Activated CD4-positive, alpha-beta memory T cell treated with anti-CD3 and anti-CD28 coated beads, Interleukin-2, amount 10 ng/mL, durations not matched to agents 7 days and 5 days (primary cell): ENCODE measurements at regions of chr17 and their contacts with region 1.

Region 1: DNA sequence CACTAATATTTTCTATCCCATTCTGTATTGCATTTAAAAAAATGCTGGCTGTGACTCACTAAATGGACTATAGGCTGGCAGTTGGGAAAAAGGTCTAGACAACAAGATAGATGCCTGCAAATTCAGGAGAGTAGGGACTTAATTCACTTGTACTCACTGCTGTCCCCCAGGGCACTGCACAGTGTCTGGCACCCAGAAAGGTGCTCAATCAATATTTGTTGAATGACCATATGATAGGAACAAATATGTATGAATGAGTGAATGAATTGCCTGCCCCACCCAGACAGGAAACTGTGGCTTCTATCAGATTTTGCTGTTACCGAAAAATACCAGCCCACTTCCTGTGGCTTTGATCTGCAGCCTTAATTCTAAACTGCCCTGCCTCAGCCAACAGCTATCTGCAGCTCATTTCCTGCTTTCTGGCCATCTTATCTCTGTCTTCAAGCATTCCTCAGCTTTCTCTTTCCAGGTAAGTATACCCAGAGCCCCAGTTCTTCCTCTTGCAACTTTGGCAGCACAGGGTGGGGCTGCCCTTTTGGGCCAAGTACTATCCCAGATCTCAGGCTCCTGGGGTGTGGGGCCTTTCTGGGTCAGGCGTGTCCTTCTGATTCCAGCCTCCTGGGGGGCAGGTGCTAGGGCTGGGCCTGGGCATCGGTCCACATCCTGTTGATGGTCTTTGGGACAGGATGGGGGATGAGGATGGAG is 15.3 kb upstream of the TNS4 start:
- DNase-seq: peak; percentile 87
- H3K4me3 Mint-ChIP-seq: peak overlapping the region; percentile 80
- H3K27ac Mint-ChIP-seq: peak overlapping the region; percentile 92
- H3K4me1 Mint-ChIP-seq: peaks cover 80% of the 10 kb centered on the region
- H3K27me3 Mint-ChIP-seq: peaks cover 2% of the 10 kb centered on the region

Region 2: GRCh38 chr17:40480501-40481003 is 36.2 kb before region 1 on chr17:
- CTCF ChIA-PET with region 1: interaction called, 20 read pairs
- POLR2A ChIA-PET with region 1: interaction called, 115 read pairs
- DNase-seq: peak; percentile 91
- H3K4me3 Mint-ChIP-seq: peak overlapping the region; percentile 55
- H3K27ac Mint-ChIP-seq: peak overlapping the region; percentile 89
- H3K4me1 Mint-ChIP-seq: peaks cover 90% of the 10 kb centered on the region
- H3K27me3 Mint-ChIP-seq: peaks cover 5% of the 10 kb centered on the region

Region 3: GRCh38 chr17:40490289-40490853 is 26.4 kb before region 1 on chr17:
- CTCF ChIA-PET with region 1: interaction called, 3 read pairs
- POLR2A ChIA-PET with region 1: interaction called, 15 read pairs
- DNase-seq: peak; percentile 30
- H3K4me3 Mint-ChIP-seq: no peak overlapping the region
- H3K27ac Mint-ChIP-seq: no peak overlapping the region
- H3K4me1 Mint-ChIP-seq: peaks cover 60% of the 10 kb centered on the region
- H3K27me3 Mint-ChIP-seq: peaks cover 5% of the 10 kb centered on the region

Region 4: GRCh38 chr17:40536295-40537171 is 19.8 kb after region 1 on chr17:
- CTCF ChIA-PET with region 1: interaction called, 59 read pairs
- POLR2A ChIA-PET with region 1: interaction called, 118 read pairs
- DNase-seq: no peak
- H3K4me3 Mint-ChIP-seq: no peak overlapping the region
- H3K27ac Mint-ChIP-seq: no peak overlapping the region
- H3K4me1 Mint-ChIP-seq: peaks cover 73% of the 10 kb centered on the region
- H3K27me3 Mint-ChIP-seq: peaks cover 32% of the 10 kb centered on the region

Region 5: DNA sequence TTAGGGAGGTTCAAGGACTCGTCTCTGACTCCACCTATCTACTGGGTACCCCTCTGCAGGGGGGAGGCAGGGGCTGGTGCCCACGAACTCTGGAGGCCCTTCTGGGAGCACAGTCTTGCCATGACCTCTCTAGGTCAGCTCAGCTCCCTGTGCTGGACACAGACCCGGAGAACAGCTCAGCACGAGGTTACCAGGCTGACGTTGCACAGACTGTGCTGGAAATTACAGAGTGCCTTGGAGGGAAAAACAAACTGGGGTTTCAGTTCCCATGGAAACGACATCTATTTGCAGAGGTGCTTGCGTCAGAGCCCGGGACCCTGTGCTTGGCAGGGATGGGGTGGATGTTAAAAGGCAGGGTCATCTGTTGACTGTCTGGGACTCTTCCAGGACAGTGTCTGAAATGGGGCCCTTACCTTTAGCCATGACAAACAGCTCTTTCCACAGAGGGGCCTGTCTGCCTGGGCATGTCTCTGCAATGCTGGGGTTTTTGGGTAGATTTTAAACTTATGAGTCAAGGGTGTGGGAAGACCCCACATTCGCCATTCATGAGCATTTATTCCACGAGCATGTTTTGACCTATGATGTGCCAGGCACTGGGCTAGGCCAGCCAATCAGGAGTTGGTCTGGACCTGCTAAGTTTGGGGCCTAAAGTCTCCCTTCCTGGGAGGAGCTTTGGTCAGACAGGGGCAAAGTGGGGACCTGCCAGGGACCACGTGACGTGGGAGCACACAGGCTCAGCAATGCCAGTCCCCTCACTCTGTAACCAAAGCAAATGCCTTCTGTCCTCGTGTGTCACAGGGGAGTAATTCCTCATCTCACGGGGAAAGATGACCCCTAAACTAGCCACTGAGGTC is 26.1 kb after region 1 on chr17:
- CTCF ChIA-PET with region 1: no interaction called
- POLR2A ChIA-PET with region 1: interaction called, 11 read pairs
- DNase-seq: no peak
- H3K4me3 Mint-ChIP-seq: no peak overlapping the region
- H3K27ac Mint-ChIP-seq: no peak overlapping the region
- H3K4me1 Mint-ChIP-seq: peaks cover 60% of the 10 kb centered on the region
- H3K27me3 Mint-ChIP-seq: peaks cover 41% of the 10 kb centered on the region

Region 6: GRCh38 chr17:40647624-40648383 is 131.1 kb after region 1 on chr17 and contains the start of gene SMARCE1:
- CTCF ChIA-PET with region 1: no interaction called
- POLR2A ChIA-PET with region 1: no interaction called
- DNase-seq: peak; percentile 73
- H3K4me3 Mint-ChIP-seq: peak within 1 kb of the TSS; percentile 95
- H3K27ac Mint-ChIP-seq: peak within 1 kb of the TSS; percentile 94
- H3K4me1 Mint-ChIP-seq: peaks cover 52% of the 10 kb centered on the region
- H3K27me3 Mint-ChIP-seq: no peaks in the 10 kb centered on the region
- total RNA-seq, gene SMARCE1: 96.7 to 102 TPM

Region 7: DNA sequence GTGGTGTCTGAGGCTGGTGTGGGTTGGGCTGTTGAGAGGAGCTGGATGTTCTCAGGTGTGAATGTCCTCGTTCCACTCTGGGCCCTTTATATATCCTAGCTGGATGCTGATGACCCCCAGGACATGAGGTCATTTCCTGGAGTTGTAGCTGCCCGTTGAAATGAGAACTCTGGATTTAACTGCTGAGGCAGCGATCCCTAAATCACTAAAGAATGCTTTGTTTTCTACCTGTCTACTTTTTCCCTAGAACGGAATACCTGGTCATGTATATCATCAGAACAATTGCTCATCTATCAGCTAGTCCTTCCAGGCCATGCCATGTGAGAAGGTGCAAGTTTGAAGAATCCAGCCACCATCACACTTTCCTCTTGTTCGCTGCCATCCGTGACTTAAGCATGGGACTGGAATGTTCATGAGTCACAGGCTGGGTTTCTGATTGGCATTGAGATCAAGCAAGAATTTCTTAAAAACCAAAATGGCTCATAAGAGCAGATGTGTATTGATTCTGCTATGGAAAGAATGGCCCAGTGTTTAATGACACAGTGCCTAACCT is 543.4 kb after region 1 on chr17 and contains the start of gene KRTAP2-3:
- CTCF ChIA-PET with region 1: no interaction called
- POLR2A ChIA-PET with region 1: no interaction called
- DNase-seq: no peak
- H3K4me3 Mint-ChIP-seq: no peak within 1 kb of the TSS
- H3K27ac Mint-ChIP-seq: no peak within 1 kb of the TSS
- H3K4me1 Mint-ChIP-seq: no peaks in the 10 kb centered on the region
- H3K27me3 Mint-ChIP-seq: peaks cover 36% of the 10 kb centered on the region
- total RNA-seq, gene KRTAP2-3: not detected